Heart left ventricle (tissue), 16 donors: ENCODE measurements at regions of chr6 and their contacts with region 1.

Region 1: DNA sequence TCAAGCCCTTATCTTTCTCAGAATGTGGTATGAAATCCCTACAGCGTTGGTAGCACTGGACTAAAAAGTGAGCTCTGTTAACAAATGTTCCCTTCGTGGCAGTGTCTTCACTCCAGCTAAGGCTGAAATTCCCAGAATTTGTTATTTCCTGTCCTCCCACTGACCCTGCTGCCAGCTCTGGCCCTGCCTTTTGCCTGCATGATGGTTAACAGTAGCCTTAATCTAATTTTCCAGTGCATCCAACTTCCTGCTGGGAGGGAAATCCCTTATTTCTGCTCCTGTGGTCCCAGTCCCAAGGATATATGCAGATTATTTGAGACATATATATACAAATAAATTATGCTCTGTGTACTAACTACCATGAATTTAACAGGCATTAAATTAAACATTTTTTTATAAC is 157.2 kb upstream of the CARMIL1 start:
- DNase-seq: peak in 4 of 5 donors; percentile 24 to 45 (median 32)
- ATAC-seq: peak in 3 of 4 donors; percentile 64 to 85 (median 78)
- H3K4me3 ChIP-seq: no peak overlapping the region
- H3K27ac ChIP-seq: peak overlapping the region in 11 of 12 donors; percentile 40 to 78 (median 58)
- H3K4me1 ChIP-seq: peaks cover 0 to 72% (median 17%) of the 10 kb centered on the region in 12 donors
- H3K27me3 ChIP-seq: no peaks in the 10 kb centered on the region
- CTCF ChIP-seq: no peak
- POLR2A ChIP-seq: no peak

Region 2: GRCh38 chr6:25103603-25104002 is 18.4 kb before region 1 on chr6:
- intact Hi-C with region 1: loop called in 1 of 10 experiments (anchors 2 kb)
- DNase-seq: no peak
- ATAC-seq: no peak
- H3K4me3 ChIP-seq: no peak overlapping the region
- H3K27ac ChIP-seq: peak overlapping the region in 1 of 12 donors; percentile 77
- H3K4me1 ChIP-seq: no peaks in the 10 kb centered on the region
- H3K27me3 ChIP-seq: no peaks in the 10 kb centered on the region
- CTCF ChIP-seq: no peak
- POLR2A ChIP-seq: no peak